MCF 10A (cell line): ENCODE measurements at regions of chr20 and their contacts with region 1.

Region 1: GRCh38 chr20:32336918-32337347 is 21.2 kb upstream of the ASXL1 start:
- DNase-seq: peak; percentile 51
- H3K4me3 Mint-ChIP-seq: no peak overlapping the region
- H3K27ac Mint-ChIP-seq: no peak overlapping the region
- H3K4me1 Mint-ChIP-seq: peaks cover 12% of the 10 kb centered on the region
- H3K27me3 Mint-ChIP-seq: no peaks in the 10 kb centered on the region
- CTCF ChIP-seq: peak; percentile 36

Region 2: GRCh38 chr20:31644701-31645100 is 692.2 kb before region 1 on chr20:
- CTCF ChIA-PET with region 1: no interaction called
- POLR2A ChIA-PET with region 1: no interaction called
- intact Hi-C with region 1: no loop called
- DNase-seq: no peak
- H3K4me3 Mint-ChIP-seq: no peak overlapping the region
- H3K27ac Mint-ChIP-seq: no peak overlapping the region
- H3K4me1 Mint-ChIP-seq: no peaks in the 10 kb centered on the region
- H3K27me3 Mint-ChIP-seq: no peaks in the 10 kb centered on the region
- CTCF ChIP-seq: no peak

Region 3: GRCh38 chr20:32484958-32485769 is 148.2 kb after region 1 on chr20:
- CTCF ChIA-PET with region 1: interaction called, 10 read pairs
- POLR2A ChIA-PET with region 1: no interaction called
- intact Hi-C with region 1: loop called (anchors 5 kb)
- DNase-seq: peak; percentile 79
- H3K4me3 Mint-ChIP-seq: peak overlapping the region; percentile 75
- H3K27ac Mint-ChIP-seq: no peak overlapping the region
- H3K4me1 Mint-ChIP-seq: peaks cover 8% of the 10 kb centered on the region
- H3K27me3 Mint-ChIP-seq: peaks cover 37% of the 10 kb centered on the region
- CTCF ChIP-seq: peak; percentile 87

Region 4: GRCh38 chr20:32779500-32780211 is 442.7 kb after region 1 on chr20:
- CTCF ChIA-PET with region 1: no interaction called
- POLR2A ChIA-PET with region 1: no interaction called
- intact Hi-C with region 1: no loop called
- DNase-seq: no peak
- H3K4me3 Mint-ChIP-seq: no peak overlapping the region
- H3K27ac Mint-ChIP-seq: no peak overlapping the region
- H3K4me1 Mint-ChIP-seq: peaks cover 17% of the 10 kb centered on the region
- H3K27me3 Mint-ChIP-seq: no peaks in the 10 kb centered on the region
- CTCF ChIP-seq: no peak

Region 5: GRCh38 chr20:32830437-32830836 is 493.5 kb after region 1 on chr20:
- CTCF ChIA-PET with region 1: no interaction called
- POLR2A ChIA-PET with region 1: no interaction called
- intact Hi-C with region 1: no loop called
- DNase-seq: no peak
- H3K4me3 Mint-ChIP-seq: no peak overlapping the region
- H3K27ac Mint-ChIP-seq: no peak overlapping the region
- H3K4me1 Mint-ChIP-seq: peaks cover 7% of the 10 kb centered on the region
- H3K27me3 Mint-ChIP-seq: no peaks in the 10 kb centered on the region
- CTCF ChIP-seq: no peak